ENCODE measurements at regions of chr9 and their contacts with region 1.

Region 1: GRCh38 chr9:21432672-21433425 is 7.4 kb upstream of the IFNA1 start:
- DNase-seq: no peak
- ATAC-seq: no peak
- H3K4me3 ChIP-seq: no peak overlapping the region
- H3K27ac ChIP-seq: no peak overlapping the region
- H3K4me1 ChIP-seq: no peaks in the 10 kb centered on the region
- H3K27me3 ChIP-seq: peaks cover 0 to 5% (median 5%) of the 10 kb centered on the region in 3 donors
- CTCF ChIP-seq: no peak

Region 2: GRCh38 chr9:21210311-21210710 is 222.5 kb before region 1 on chr9:
- intact Hi-C with region 1: no loop called
- DNase-seq: no peak
- ATAC-seq: no peak
- H3K4me3 ChIP-seq: no peak overlapping the region
- H3K27ac ChIP-seq: no peak overlapping the region
- H3K4me1 ChIP-seq: no peaks in the 10 kb centered on the region
- H3K27me3 ChIP-seq: no peaks in the 10 kb centered on the region
- CTCF ChIP-seq: no peak

Region 3: DNA sequence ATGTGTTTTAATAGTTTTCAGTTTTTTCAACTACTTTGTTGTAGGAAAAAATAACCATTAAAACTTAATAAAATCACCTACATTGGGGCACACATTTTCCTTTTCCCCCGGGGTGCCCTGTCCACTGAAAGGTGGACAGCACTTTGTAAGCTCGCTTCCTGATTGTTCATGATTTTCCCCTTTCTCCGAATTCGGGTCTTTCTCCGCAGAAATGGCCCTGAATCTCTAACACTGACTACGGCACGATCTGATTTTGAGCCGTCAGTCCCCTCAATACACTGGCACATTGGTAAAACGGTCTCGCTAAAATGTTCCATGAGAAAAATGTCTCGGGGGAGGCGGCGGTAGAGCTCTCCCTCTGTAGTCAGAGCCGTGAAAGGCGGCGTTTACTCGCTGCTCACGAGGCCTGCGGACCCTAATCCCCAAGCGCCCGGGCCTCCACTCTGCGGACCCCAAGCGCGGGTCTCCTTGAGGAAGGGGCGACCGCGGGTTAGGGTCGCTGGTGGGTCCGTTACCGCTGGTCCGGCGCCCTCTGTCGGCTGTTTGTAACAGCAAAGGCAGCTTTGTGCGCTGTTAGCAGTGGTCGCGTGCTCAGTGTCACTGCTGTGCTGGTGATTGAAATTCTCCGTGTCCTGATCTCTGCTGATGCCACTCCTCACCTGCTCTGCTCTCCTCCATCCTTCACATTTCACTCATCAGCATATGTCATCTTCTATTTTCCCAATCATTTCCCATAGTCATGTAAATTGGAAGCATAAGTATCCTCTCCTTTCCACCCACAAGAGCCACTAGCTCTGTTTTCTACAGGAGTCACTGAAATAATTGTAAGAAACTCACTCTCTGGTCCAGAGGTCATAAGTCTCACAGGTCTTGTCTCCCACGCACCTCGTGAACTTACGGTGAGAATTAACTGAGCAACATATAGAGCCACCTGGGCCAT is 36.8 kb before region 1 on chr9:
- intact Hi-C with region 1: no loop called
- DNase-seq: peak; percentile 39 to 66
- ATAC-seq: peak; percentile 46 to 88 (median 70)
- H3K4me3 ChIP-seq: peak overlapping the region; percentile 71
- H3K27ac ChIP-seq: no peak overlapping the region
- H3K4me1 ChIP-seq: no peaks in the 10 kb centered on the region
- H3K27me3 ChIP-seq: peaks cover 0 to 11% (median 0%) of the 10 kb centered on the region in 3 donors
- CTCF ChIP-seq: peak; percentile 82

Region 4: GRCh38 chr9:21413624-21414023 is 19.2 kb before region 1 on chr9:
- intact Hi-C with region 1: loop called in 1 of 2 experiments (anchors 2 kb)
- DNase-seq: no peak
- ATAC-seq: no peak
- H3K4me3 ChIP-seq: no peak overlapping the region
- H3K27ac ChIP-seq: no peak overlapping the region
- H3K4me1 ChIP-seq: no peaks in the 10 kb centered on the region
- H3K27me3 ChIP-seq: peaks cover 0 to 4% (median 0%) of the 10 kb centered on the region in 3 donors
- CTCF ChIP-seq: no peak